Mammary epithelial cell (primary cell): ENCODE measurements at regions of chr6 and their contacts with region 1.

Region 1: DNA sequence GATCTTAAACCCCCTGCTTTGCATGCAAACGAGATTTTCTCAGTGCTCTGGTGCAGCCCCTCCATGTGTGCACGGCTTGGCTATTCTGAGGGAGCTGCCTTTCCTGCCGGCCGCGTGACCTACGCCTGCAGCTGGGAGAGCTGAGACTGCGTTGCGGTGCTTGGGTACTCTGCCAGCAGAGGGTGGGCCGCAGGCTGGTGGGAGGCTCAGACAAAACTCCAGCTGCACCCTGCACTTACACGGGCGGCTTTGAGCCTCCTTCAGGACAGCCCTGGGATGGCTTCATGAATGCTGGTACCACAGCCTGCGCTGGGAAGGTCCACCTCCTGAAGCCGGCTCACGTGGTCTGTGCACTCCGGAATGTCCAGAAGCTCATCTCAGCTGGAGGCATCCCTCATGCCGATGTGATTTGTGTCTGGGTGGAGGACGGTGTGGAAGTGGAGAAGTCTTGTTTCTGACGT is 223.7 kb downstream of the DLL1 start:
- DNase-seq: no peak
- H3K4me3 ChIP-seq: no peak overlapping the region
- H3K27ac ChIP-seq: no peak overlapping the region
- H3K4me1 ChIP-seq: no peaks in the 10 kb centered on the region
- H3K27me3 ChIP-seq: no peaks in the 10 kb centered on the region
- CTCF ChIP-seq: no peak

Region 2: DNA sequence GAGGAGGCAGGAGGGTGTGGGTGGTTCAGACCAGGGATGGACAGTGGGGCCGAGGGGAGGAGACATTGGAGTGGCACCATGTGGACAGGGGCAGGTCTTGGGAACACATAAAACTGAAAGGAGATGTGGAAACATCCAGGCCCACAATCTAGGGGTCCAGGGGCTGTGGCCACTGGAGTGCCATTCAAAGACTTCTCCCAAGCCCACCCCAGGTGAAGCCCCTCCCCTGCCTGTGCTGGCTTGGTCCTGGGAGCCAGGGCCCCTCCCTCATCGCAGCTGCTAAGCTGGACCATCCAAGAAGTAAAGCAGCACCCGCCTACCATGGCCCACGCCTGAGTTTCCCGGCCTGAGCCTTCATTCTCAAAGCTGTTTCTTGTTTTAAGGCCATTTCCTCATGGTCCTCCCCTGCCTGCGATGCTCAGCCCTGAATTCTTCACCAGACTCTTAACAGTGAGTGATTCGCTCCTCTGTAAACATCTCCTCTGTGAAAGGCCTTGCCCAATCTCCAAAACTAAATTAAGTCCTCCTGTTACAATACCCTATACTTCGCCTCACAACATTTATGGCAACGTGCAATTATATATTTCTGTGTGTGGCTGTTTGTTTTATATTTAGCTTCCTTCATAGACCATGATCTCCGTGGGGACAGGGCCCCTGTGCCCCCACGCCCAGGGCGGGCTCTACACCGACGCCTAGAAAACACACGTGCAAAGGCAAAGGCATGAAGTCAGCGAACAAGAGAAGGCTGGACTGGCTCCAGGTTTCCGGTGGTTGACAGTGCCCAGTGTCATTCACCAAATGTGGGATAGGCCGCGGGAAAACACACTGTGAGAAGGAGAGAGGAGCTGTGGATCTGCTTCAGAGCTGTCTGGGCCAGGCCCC is 48.0 kb before region 1 on chr6:
- CTCF ChIA-PET with region 1: no interaction called
- dilution Hi-C with region 1: loop called (anchors 5 kb)
- in situ Hi-C with region 1: no loop called
- intact Hi-C with region 1: no loop called
- DNase-seq: no peak
- H3K4me3 ChIP-seq: no peak overlapping the region
- H3K27ac ChIP-seq: no peak overlapping the region
- H3K4me1 ChIP-seq: no peaks in the 10 kb centered on the region
- H3K27me3 ChIP-seq: no peaks in the 10 kb centered on the region
- CTCF ChIP-seq: no peak

Region 3: DNA sequence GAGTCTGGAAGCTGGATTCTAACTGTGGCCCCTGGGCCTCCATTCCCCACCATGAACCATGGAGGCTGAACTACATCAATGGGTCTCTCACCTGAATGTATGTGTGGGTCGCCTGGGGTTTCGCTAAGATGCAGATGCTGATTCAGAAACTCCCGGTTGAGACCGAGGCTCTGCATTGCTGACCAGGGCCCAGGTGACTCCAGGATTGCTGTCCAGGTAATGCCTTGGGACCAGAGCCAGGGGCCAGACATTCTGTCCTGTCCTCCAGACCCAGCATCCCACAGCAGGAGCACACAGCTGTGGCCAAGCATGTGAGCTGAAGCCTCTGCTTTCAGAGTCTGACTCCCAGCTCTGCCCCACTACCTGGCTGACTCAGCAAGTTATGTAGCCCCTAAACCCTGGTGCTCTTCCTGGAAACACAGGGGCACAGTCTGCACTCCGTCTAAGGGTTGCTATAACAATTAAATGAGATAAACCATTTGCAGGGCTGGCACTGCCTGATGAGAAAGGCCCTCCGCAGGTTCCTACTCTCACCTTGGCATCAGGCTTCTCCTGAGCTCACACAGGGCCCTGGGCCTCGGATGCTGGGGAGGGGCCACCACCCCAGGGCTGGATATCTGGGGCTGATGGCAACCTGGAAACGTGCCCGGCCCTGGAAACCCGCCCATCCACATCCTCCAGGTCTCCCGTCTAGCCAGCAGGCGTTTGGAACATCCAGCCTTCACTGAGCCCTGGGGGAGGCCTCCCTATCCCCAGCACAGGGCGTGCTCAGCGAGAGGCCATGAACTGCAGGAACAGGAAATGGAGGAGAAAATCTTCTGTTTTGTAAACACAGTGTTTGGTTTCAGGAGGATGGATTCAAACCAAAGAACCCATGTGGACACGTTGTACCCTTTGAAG is 48.0 kb after region 1 on chr6:
- CTCF ChIA-PET with region 1: no interaction called
- dilution Hi-C with region 1: loop called (anchors 5 kb)
- in situ Hi-C with region 1: no loop called
- intact Hi-C with region 1: no loop called
- DNase-seq: no peak
- H3K4me3 ChIP-seq: no peak overlapping the region
- H3K27ac ChIP-seq: no peak overlapping the region
- H3K4me1 ChIP-seq: no peaks in the 10 kb centered on the region
- H3K27me3 ChIP-seq: no peaks in the 10 kb centered on the region
- CTCF ChIP-seq: no peak

Region 4: DNA sequence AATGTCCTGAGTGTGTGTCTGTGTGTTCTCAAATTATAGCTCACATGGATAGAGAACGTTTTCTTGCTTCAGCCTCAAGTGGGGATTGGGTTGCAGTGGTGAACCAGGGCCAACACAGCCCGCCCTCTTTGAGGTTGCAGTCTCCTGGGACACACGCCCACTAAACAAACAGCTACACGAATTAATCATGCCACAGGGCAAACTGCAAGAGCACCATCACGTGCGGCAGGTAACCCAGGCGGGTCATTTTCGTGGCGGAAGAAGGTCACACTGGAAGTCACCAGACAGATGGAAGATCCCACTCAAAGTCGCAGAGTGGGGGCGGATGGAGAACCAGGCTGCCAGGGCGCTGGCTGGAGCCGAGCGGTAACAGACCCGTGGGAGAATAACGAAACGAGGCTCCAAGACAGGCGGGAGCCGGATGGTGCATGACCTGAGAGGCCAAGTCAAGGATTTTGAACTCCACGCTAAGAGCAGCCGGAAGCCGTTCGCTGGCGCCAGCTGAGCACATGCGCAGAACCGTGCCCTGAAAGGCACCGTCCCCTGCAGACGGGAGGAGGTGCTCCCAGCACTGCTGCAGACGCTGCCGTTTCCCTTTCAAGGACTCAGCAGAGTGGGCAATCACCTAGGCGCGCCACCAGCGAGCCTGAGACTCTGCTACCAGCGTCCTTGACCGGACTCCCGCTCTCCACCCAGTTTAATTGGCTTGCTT is 212.9 kb after region 1 on chr6:
- CTCF ChIA-PET with region 1: no interaction called
- dilution Hi-C with region 1: no loop called
- in situ Hi-C with region 1: no loop called
- intact Hi-C with region 1: no loop called
- DNase-seq: no peak
- H3K4me3 ChIP-seq: no peak overlapping the region
- H3K27ac ChIP-seq: no peak overlapping the region
- H3K4me1 ChIP-seq: no peaks in the 10 kb centered on the region
- H3K27me3 ChIP-seq: no peaks in the 10 kb centered on the region
- CTCF ChIP-seq: no peak